Gastrocnemius medialis (tissue), 4 donors: ENCODE measurements at regions of chr2 and their contacts with region 1.

Region 1: GRCh38 chr2:178632729-178633128 is 152.5 kb downstream of the PLEKHA3 start:
- DNase-seq: no peak
- ATAC-seq: no peak
- H3K4me3 ChIP-seq: no peak overlapping the region
- H3K27ac ChIP-seq: peak overlapping the region in 2 of 4 donors; percentile 2 to 7
- H3K4me1 ChIP-seq: peaks cover 43 to 60% of the 10 kb centered on the region in 2 donors
- H3K27me3 ChIP-seq: no peaks in the 10 kb centered on the region
- CTCF ChIP-seq: no peak
- POLR2A ChIP-seq: no peak

Region 2: GRCh38 chr2:178644933-178645332 is 12.2 kb after region 1 on chr2:
- in situ Hi-C with region 1: no loop called
- intact Hi-C with region 1: loop called (anchors 1 kb)
- DNase-seq: no peak
- ATAC-seq: no peak
- H3K4me3 ChIP-seq: no peak overlapping the region
- H3K27ac ChIP-seq: peak overlapping the region in 2 of 4 donors; percentile 3 to 32
- H3K4me1 ChIP-seq: peaks cover 28 to 40% of the 10 kb centered on the region in 2 donors
- H3K27me3 ChIP-seq: no peaks in the 10 kb centered on the region
- CTCF ChIP-seq: no peak
- POLR2A ChIP-seq: no peak

Region 3: GRCh38 chr2:178692845-178693244 is 60.1 kb after region 1 on chr2:
- in situ Hi-C with region 1: no loop called
- intact Hi-C with region 1: loop called (anchors 5 kb)
- DNase-seq: no peak
- ATAC-seq: no peak
- H3K4me3 ChIP-seq: no peak overlapping the region
- H3K27ac ChIP-seq: no peak overlapping the region
- H3K4me1 ChIP-seq: peaks cover 29 to 46% of the 10 kb centered on the region in 2 donors
- H3K27me3 ChIP-seq: no peaks in the 10 kb centered on the region
- CTCF ChIP-seq: no peak
- POLR2A ChIP-seq: no peak